Activated CD4-positive, alpha-beta T cell treated with anti-CD3 and anti-CD28 coated beads for 36 hours (primary cell): ENCODE measurements at regions of chr20 and their contacts with region 1.

Region 1: DNA sequence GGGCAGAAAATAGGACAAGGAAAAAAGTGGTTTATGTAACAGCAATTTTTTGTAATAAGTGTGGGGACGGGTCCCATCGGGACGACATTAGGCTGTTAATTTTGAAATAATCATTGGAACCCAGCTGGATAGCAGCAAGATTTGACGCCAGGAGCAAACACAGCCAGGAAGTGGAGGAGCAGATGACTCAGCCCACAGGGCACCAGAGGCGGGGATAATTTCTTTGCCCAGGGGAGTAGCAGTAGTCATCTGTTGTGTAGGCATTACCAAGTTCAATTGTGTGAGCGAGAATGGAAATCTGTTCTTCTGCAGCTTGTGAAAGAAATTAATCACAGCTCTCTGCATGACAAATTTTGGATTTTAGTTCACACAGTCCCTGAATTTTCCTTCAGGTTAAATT is 22.6 kb upstream of the RIN2 start:
- DNase-seq: peak; percentile 52
- ATAC-seq: peak; percentile 54
- H3K4me3 Mint-ChIP-seq: no peak overlapping the region
- H3K27ac Mint-ChIP-seq: no peak overlapping the region
- H3K4me1 Mint-ChIP-seq: peaks cover 17% of the 10 kb centered on the region
- H3K27me3 Mint-ChIP-seq: peaks cover 10% of the 10 kb centered on the region

Region 2: GRCh38 chr20:19361790-19362189 is 373.7 kb before region 1 on chr20:
- CTCF ChIA-PET with region 1: no interaction called
- POLR2A ChIA-PET with region 1: no interaction called
- intact Hi-C with region 1: no loop called
- DNase-seq: no peak
- ATAC-seq: no peak
- H3K4me3 Mint-ChIP-seq: no peak overlapping the region
- H3K27ac Mint-ChIP-seq: no peak overlapping the region
- H3K4me1 Mint-ChIP-seq: no peaks in the 10 kb centered on the region
- H3K27me3 Mint-ChIP-seq: peaks cover 4% of the 10 kb centered on the region

Region 3: GRCh38 chr20:19757487-19758132 is 22.2 kb after region 1 on chr20:
- CTCF ChIA-PET with region 1: no interaction called
- POLR2A ChIA-PET with region 1: no interaction called
- intact Hi-C with region 1: no loop called
- DNase-seq: peak; percentile 51
- ATAC-seq: peak; percentile 63
- H3K4me3 Mint-ChIP-seq: peak overlapping the region; percentile 55
- H3K27ac Mint-ChIP-seq: no peak overlapping the region
- H3K4me1 Mint-ChIP-seq: peaks cover 3% of the 10 kb centered on the region
- H3K27me3 Mint-ChIP-seq: peaks cover 33% of the 10 kb centered on the region

Region 4: DNA sequence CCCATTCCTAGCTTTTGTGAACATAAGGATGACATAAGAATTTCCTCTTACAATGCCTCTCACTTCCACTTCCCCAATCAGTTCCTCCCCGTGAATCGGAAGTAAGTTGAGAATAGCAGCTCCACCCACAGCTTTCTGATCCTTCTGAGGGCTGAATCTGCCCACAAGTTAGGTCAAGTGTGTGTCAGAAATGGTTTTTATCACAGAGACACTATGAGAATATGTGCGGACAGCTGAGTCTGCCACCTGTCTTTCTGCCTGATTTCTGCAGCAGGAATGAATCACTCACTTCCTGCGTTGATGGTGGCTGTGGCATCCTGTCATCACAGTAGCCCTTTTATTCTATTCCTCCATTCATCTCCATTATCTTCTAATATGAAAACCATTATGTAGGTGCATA is 92.8 kb after region 1 on chr20:
- CTCF ChIA-PET with region 1: no interaction called
- POLR2A ChIA-PET with region 1: no interaction called
- intact Hi-C with region 1: loop called in 1 of 2 experiments (anchors 5 kb)
- DNase-seq: peak; percentile 58
- ATAC-seq: peak; percentile 95
- H3K4me3 Mint-ChIP-seq: no peak overlapping the region
- H3K27ac Mint-ChIP-seq: no peak overlapping the region
- H3K4me1 Mint-ChIP-seq: peaks cover 15% of the 10 kb centered on the region
- H3K27me3 Mint-ChIP-seq: peaks cover 7% of the 10 kb centered on the region

Region 5: GRCh38 chr20:19838468-19838867 is 103.0 kb after region 1 on chr20:
- CTCF ChIA-PET with region 1: no interaction called
- POLR2A ChIA-PET with region 1: no interaction called
- intact Hi-C with region 1: no loop called
- DNase-seq: no peak
- ATAC-seq: no peak
- H3K4me3 Mint-ChIP-seq: no peak overlapping the region
- H3K27ac Mint-ChIP-seq: no peak overlapping the region
- H3K4me1 Mint-ChIP-seq: no peaks in the 10 kb centered on the region
- H3K27me3 Mint-ChIP-seq: peaks cover 5% of the 10 kb centered on the region

Region 6: GRCh38 chr20:19944772-19945459 is 209.5 kb after region 1 on chr20:
- CTCF ChIA-PET with region 1: no interaction called
- POLR2A ChIA-PET with region 1: interaction called, 4 read pairs
- intact Hi-C with region 1: loop called in 1 of 2 experiments (anchors 1 kb)
- DNase-seq: peak; percentile 60
- ATAC-seq: peak; percentile 86
- H3K4me3 Mint-ChIP-seq: no peak overlapping the region
- H3K27ac Mint-ChIP-seq: no peak overlapping the region
- H3K4me1 Mint-ChIP-seq: peaks cover 20% of the 10 kb centered on the region
- H3K27me3 Mint-ChIP-seq: peaks cover 10% of the 10 kb centered on the region

Region 7: GRCh38 chr20:20237093-20237959 is 501.9 kb after region 1 on chr20:
- CTCF ChIA-PET with region 1: no interaction called
- POLR2A ChIA-PET with region 1: no interaction called
- intact Hi-C with region 1: no loop called
- DNase-seq: peak; percentile 48
- ATAC-seq: peak; percentile 39
- H3K4me3 Mint-ChIP-seq: no peak overlapping the region
- H3K27ac Mint-ChIP-seq: no peak overlapping the region
- H3K4me1 Mint-ChIP-seq: no peaks in the 10 kb centered on the region
- H3K27me3 Mint-ChIP-seq: peaks cover 2% of the 10 kb centered on the region